Activated B cell treated with CpG ODN at 0.5 μM for 24 hours (primary cell): ENCODE measurements at regions of chrX and their contacts with region 1.

Region 1: DNA sequence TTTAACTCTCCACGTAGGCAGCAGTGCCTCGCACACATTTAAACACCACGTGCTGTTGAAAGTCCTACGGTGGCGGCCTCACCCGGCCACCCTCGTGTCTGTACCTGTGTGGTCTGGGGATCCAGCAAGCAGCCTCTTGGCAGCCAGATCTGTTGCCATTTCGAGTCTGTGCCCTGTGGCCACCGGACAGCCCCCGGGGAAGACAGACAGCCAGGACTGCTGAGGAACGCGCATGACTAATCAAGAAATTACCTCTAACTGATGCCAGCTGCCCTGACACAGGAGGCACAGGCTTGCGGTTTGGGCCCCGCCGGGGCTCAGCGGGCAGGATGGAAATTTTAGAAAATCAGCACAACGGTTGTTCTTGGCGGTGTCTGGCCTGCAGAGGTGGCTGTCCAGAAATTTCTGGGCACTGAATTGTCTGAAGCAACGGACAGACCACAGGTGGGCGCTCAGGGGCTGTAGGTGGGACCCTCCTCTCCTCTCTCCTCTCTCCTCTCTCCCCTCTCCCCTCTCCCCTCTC is 15.6 kb upstream of the ASMTL start:
- DNase-seq: peak; percentile 71
- ATAC-seq: peak; percentile 78
- H3K4me3 Mint-ChIP-seq: peak overlapping the region; percentile 73
- H3K27ac Mint-ChIP-seq: peak overlapping the region; percentile 96
- H3K4me1 Mint-ChIP-seq: peaks cover 88% of the 10 kb centered on the region
- H3K27me3 Mint-ChIP-seq: no peaks in the 10 kb centered on the region
- CTCF ChIP-seq: no peak

Region 2: DNA sequence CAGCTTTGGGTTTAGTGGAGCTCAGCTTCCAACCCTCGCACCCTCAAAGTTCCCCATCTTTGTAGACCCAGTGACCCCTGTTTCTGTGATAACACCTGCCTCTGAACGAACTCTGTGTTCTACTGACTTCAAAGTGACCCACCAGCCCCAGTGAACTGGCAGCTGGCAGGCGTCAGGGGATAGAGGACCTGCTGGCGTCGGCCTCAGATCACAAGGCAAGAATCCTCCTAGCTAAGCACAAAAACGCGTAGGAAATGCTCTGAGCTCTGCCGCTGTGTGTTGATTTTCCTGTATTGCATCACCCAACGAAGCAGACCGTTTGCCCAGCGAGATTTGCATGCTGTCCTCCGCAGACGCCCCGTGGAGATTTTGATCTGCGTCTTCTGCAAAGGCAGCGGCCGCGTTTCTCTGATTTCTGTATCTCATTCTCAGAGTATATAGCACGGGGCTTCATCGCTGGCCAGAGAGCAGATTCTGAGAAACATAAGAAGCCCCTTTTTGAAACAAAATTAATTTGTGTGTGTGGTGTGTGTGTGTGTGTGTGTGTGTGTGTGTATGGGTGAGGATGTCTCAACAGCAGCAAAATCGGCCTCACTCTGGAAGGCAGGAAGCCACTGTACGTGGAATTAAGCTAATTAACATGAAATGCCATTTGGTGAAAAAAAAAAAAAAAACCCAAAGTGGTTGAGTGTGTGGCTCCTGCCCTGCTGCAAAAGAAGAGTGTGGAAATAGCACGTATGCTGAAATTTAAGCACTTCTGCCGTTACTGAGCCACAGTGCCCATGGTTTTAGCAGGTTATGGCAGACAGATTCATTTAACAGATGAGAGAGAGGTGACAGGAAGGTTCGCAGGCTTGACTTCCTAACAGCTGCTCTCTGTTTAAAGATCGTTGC is 13.6 kb after region 1 on chrX:
- CTCF ChIA-PET with region 1: no interaction called
- POLR2A ChIA-PET with region 1: no interaction called
- intact Hi-C with region 1: loop called (anchors 1 kb)
- DNase-seq: peak; percentile 63
- ATAC-seq: peak; percentile 53
- H3K4me3 Mint-ChIP-seq: peak overlapping the region; percentile 81
- H3K27ac Mint-ChIP-seq: peak overlapping the region; percentile 97
- H3K4me1 Mint-ChIP-seq: peaks cover 90% of the 10 kb centered on the region
- H3K27me3 Mint-ChIP-seq: no peaks in the 10 kb centered on the region
- CTCF ChIP-seq: no peak

Region 3: GRCh38 chrX:1491851-1492349 is 23.6 kb after region 1 on chrX:
- CTCF ChIA-PET with region 1: no interaction called
- POLR2A ChIA-PET with region 1: no interaction called
- intact Hi-C with region 1: loop called (anchors 1 kb)
- DNase-seq: peak; percentile 61
- ATAC-seq: peak; percentile 66
- H3K4me3 Mint-ChIP-seq: peak overlapping the region; percentile 88
- H3K27ac Mint-ChIP-seq: peak overlapping the region; percentile 88
- H3K4me1 Mint-ChIP-seq: peaks cover 69% of the 10 kb centered on the region
- H3K27me3 Mint-ChIP-seq: no peaks in the 10 kb centered on the region
- CTCF ChIP-seq: no peak

Region 4: DNA sequence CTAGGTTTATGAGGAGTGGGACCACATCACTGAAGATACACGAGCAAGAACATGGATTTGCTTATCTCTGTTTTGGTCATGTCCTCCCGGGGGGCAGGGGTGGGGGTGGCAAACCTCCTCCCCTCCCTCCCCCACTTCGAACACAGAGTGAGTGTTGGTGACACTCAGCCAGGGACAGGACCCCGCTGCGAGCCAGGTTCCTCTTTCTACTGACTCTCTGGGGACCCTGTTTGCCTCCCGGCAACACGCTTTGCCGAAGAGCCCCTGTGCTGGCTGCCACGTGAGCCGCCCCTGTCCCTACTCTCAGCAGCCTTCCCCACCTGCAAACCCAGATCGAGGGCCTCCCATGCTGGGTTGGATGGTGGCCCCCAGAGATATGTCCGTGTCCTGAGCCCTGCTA is 33.9 kb after region 1 on chrX:
- CTCF ChIA-PET with region 1: no interaction called
- POLR2A ChIA-PET with region 1: no interaction called
- intact Hi-C with region 1: loop called (anchors 1 kb)
- DNase-seq: peak; percentile 73
- ATAC-seq: peak; percentile 85
- H3K4me3 Mint-ChIP-seq: peak overlapping the region; percentile 66
- H3K27ac Mint-ChIP-seq: no peak overlapping the region
- H3K4me1 Mint-ChIP-seq: peaks cover 25% of the 10 kb centered on the region
- H3K27me3 Mint-ChIP-seq: no peaks in the 10 kb centered on the region
- CTCF ChIP-seq: no peak

Region 5: GRCh38 chrX:1521459-1521956 is 53.2 kb after region 1 on chrX:
- CTCF ChIA-PET with region 1: no interaction called
- POLR2A ChIA-PET with region 1: no interaction called
- intact Hi-C with region 1: loop called (anchors 1 kb)
- DNase-seq: peak; percentile 66
- ATAC-seq: peak; percentile 85
- H3K4me3 Mint-ChIP-seq: peak overlapping the region; percentile 83
- H3K27ac Mint-ChIP-seq: peak overlapping the region; percentile 97
- H3K4me1 Mint-ChIP-seq: peaks cover 64% of the 10 kb centered on the region
- H3K27me3 Mint-ChIP-seq: no peaks in the 10 kb centered on the region
- CTCF ChIP-seq: no peak

Region 6: DNA sequence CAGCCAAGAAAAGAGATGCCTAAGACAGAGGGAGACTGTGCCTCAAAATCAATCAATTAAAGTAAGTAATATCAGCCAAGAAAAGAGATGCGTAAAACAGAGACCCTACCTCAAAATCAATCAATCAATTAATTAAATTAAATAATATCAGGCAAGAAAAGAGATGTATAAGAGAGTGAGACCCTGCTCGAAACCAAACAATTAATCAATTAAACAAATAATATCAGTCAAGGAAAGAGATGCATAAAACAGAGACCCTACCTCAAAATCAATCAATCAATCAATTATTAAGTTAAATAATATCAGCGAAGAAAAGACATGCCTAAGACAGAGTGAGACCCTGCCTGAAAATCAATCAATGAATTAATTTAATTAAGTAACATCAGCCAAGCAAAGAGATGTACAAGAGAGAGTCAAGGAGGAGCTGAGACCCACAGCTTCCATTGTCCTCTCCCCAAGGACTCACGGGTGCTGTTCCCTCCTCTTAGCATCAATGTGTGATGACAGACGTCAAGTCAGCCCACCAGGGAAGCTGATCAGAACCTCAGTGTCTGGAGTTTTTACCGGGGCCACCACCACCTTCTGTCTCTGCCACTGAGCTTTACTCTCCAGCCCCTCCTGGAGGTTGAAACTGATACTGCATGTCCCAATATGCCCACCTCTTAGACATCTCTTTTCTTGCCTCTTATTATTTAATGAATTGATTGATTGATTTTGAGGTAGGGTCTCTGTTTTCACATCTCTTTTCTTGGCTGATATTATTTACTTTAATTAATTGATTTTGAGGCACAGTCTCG is 112.6 kb after region 1 on chrX:
- CTCF ChIA-PET with region 1: no interaction called
- POLR2A ChIA-PET with region 1: no interaction called
- intact Hi-C with region 1: loop called (anchors 1 kb)
- DNase-seq: no peak
- ATAC-seq: peak; percentile 80
- H3K4me3 Mint-ChIP-seq: no peak overlapping the region
- H3K27ac Mint-ChIP-seq: no peak overlapping the region
- H3K4me1 Mint-ChIP-seq: peaks cover 27% of the 10 kb centered on the region
- H3K27me3 Mint-ChIP-seq: no peaks in the 10 kb centered on the region
- CTCF ChIP-seq: peak; percentile 51

Region 7: DNA sequence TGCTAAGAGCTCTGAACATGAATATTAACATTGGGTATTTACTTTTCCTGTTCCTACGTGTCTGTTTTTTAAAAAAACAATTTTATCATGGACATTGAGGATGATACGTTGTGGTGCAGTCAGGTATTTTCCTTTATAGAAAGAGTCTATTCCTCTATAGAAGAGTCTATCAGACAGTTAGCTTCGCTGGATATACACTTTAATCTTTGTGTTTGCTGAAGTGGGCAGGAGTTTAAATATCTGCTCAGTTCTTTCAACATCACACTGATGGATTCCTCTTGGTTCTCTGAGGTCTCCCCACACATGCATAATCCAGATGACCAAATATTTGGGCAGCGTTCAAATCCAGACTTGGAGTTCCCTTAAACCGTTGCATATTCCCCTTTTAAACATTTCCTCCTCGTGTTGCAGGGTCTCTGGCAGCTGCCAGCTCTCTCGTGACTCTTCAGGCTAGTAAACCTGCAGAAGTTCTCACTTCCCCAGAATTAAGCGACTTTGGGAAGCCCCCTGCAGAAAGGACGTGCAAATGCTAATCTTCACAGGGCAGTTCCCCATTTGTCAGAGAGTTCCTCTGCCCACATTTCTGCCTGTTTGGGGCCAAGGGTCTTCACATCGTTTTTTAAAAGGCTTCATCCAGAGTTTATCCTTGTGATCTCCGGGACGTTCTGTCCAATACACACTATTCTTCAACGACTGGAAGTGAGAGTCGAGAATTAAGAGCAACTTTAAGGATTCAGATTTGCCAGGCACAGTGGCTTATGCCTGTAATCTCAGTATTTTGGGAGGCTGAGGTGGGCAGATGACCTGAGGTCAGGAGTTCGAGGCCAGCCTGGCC is 1053.0 kb after region 1 on chrX:
- CTCF ChIA-PET with region 1: no interaction called
- POLR2A ChIA-PET with region 1: no interaction called
- intact Hi-C with region 1: loop called (anchors 5 kb)
- DNase-seq: peak; percentile 34
- ATAC-seq: peak; percentile 88
- H3K4me3 Mint-ChIP-seq: peak overlapping the region; percentile 71
- H3K27ac Mint-ChIP-seq: no peak overlapping the region
- H3K4me1 Mint-ChIP-seq: peaks cover 28% of the 10 kb centered on the region
- H3K27me3 Mint-ChIP-seq: no peaks in the 10 kb centered on the region
- CTCF ChIP-seq: no peak